ENCODE measurements at regions of chr2 and their contacts with region 1.

Region 1: DNA sequence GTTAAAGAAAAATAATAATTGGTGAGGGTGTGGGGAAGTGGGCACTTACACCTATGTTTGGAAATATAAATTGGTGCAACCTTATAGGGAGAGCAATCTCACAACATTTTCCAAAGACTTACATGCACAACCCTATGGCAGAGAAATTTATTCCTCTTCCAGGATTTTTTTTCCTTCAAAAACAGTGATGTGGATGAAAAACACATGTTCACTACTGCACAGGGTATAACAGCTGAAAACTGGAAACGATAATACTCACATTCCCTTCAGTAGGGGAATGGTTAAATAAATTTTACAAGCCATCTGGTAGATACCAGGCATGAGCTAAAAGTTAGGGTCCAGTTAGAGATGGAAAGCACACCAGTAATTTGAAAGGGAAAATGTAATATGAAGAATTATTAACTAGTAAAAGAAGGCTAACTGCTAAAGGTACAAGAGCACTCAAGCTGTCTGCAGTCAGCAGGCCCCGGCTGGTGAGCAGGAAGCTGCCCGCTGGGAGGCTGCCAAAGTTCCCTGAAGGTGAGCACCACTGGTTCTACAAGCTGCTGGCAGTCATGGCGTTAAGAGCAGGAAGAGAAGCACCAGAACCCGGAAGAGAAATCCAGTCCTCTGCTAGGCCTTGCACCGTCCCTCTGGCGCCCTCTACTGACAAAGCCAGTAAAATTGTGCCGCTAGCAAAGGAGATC is 28.4 kb upstream of the CASP8 start:
- DNase-seq: peak; percentile 85 to 96
- ATAC-seq: peak; percentile 66 to 76
- H3K4me3 ChIP-seq: peak overlapping the region; percentile 20; the same call in 1 of the 3 replicates
- H3K27ac ChIP-seq: peak overlapping the region; percentile 63 to 84
- H3K4me1 ChIP-seq: peaks cover 23% of the 10 kb centered on the region
- CTCF ChIP-seq: peak; percentile 89
- EP300 ChIP-seq: no peak
- POLR2A ChIP-seq: no peak
- RAD21 ChIP-seq: peak; percentile 79 to 89

Region 2: GRCh38 chr2:200901459-200902072 is 330.4 kb before region 1 on chr2:
- CTCF ChIA-PET with region 1: interaction called, 47 read pairs
- POLR2A ChIA-PET with region 1: interaction called, 5 read pairs
- DNase-seq: peak; percentile 90 to 94
- ATAC-seq: peak; percentile 95 to 98
- H3K4me3 ChIP-seq: no peak overlapping the region
- H3K27ac ChIP-seq: no peak overlapping the region
- H3K4me1 ChIP-seq: peaks cover 12% of the 10 kb centered on the region; the same call in 1 of the 3 replicates
- CTCF ChIP-seq: peak; percentile 87
- EP300 ChIP-seq: no peak
- POLR2A ChIP-seq: no peak
- RAD21 ChIP-seq: peak; percentile 85 to 88

Region 3: GRCh38 chr2:200913654-200914053 is 318.3 kb before region 1 on chr2:
- CTCF ChIA-PET with region 1: interaction called, 14 read pairs
- POLR2A ChIA-PET with region 1: no interaction called
- DNase-seq: no peak
- ATAC-seq: no peak
- H3K4me3 ChIP-seq: no peak overlapping the region
- H3K27ac ChIP-seq: no peak overlapping the region
- H3K4me1 ChIP-seq: no peaks in the 10 kb centered on the region
- CTCF ChIP-seq: no peak
- EP300 ChIP-seq: no peak
- POLR2A ChIP-seq: no peak
- RAD21 ChIP-seq: no peak

Region 4: DNA sequence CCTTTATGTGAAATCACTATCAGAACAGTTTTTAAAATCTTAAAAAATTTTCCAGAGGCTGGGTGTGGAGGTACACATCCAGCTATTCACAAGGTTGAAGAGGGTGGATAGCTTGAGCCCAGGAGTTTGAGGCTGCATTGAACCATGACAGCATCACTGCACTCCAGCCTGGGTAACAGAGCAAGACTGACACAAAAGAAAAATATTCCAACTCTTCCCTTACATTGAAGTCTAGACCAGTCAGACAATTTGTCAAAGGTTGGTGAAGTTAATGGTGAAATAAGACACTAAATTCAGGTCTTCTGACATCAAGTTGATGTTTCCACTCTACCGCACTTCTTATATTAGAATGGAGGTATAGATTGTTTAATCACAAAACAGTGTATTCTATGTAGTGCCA is 213.3 kb before region 1 on chr2:
- CTCF ChIA-PET with region 1: no interaction called
- POLR2A ChIA-PET with region 1: no interaction called
- DNase-seq: no peak
- ATAC-seq: no peak
- H3K4me3 ChIP-seq: no peak overlapping the region
- H3K27ac ChIP-seq: no peak overlapping the region
- H3K4me1 ChIP-seq: no peaks in the 10 kb centered on the region
- CTCF ChIP-seq: no peak
- EP300 ChIP-seq: no peak
- POLR2A ChIP-seq: no peak
- RAD21 ChIP-seq: no peak

Region 5: GRCh38 chr2:201182650-201183364 is 49.1 kb before region 1 on chr2 and contains the start of gene CASP10:
- CTCF ChIA-PET with region 1: interaction called, 45 read pairs
- POLR2A ChIA-PET with region 1: interaction called, 23 read pairs
- DNase-seq: peak; percentile 84 to 89
- ATAC-seq: peak; percentile 95 to 97
- H3K4me3 ChIP-seq: peak within 1 kb of the TSS; percentile 52
- H3K27ac ChIP-seq: peak within 1 kb of the TSS; percentile 73 to 85
- H3K4me1 ChIP-seq: peaks cover 11% of the 10 kb centered on the region; the same call in 2 of the 3 replicates
- CTCF ChIP-seq: peak; percentile 71
- EP300 ChIP-seq: no peak
- POLR2A ChIP-seq: no peak
- RAD21 ChIP-seq: peak; percentile 68 to 77
- polyA plus RNA-seq, gene CASP10: 6.5 and 6.8 TPM in 2 replicates

Region 6: GRCh38 chr2:201194097-201194496 is 37.8 kb before region 1 on chr2:
- CTCF ChIA-PET with region 1: interaction called, 10 read pairs
- POLR2A ChIA-PET with region 1: no interaction called
- DNase-seq: no peak
- ATAC-seq: no peak
- H3K4me3 ChIP-seq: no peak overlapping the region
- H3K27ac ChIP-seq: no peak overlapping the region
- H3K4me1 ChIP-seq: no peaks in the 10 kb centered on the region
- CTCF ChIP-seq: no peak
- EP300 ChIP-seq: no peak
- POLR2A ChIP-seq: no peak
- RAD21 ChIP-seq: no peak

Region 7: DNA sequence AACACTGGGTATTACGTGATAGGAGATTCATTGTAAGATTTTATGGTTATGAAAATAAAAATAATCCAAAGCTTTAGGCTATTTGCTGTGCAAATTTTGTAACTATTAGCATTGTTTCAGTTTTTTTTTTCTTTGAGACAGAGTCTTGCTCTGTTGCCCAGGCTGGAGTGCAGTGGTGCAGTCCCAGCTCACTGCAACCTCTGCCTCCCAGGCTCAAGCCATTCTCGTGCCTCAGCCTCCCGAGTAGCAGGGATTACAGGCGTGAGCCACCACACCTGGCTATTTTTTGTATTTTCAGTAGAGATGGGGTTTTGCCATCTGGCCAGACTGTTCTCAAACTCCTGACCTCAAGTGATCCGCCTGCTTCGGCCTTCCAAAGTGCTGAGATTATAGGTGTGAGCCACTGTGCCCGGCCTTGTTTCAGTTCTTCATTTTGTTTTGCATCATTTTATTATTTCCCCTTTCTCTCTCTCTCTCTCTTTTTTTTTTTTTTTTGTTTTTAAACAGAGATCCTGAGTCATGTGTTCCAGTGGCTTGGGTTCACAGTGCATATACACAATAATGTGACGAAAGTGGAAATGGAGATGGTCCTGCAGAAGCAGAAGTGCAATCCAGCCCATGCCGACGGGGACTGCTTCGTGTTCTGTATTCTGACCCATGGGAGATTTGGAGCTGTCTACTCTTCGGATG is 23.2 kb before region 1 on chr2:
- CTCF ChIA-PET with region 1: interaction called, 12 read pairs
- POLR2A ChIA-PET with region 1: no interaction called
- DNase-seq: no peak
- ATAC-seq: no peak
- H3K4me3 ChIP-seq: no peak overlapping the region
- H3K27ac ChIP-seq: no peak overlapping the region
- H3K4me1 ChIP-seq: no peaks in the 10 kb centered on the region
- CTCF ChIP-seq: no peak
- EP300 ChIP-seq: no peak
- POLR2A ChIP-seq: no peak
- RAD21 ChIP-seq: no peak

Region 8: GRCh38 chr2:201220102-201220570 is 11.8 kb before region 1 on chr2:
- CTCF ChIA-PET with region 1: interaction called, 25 read pairs
- POLR2A ChIA-PET with region 1: no interaction called
- DNase-seq: no peak
- ATAC-seq: no peak
- H3K4me3 ChIP-seq: no peak overlapping the region
- H3K27ac ChIP-seq: no peak overlapping the region
- H3K4me1 ChIP-seq: no peaks in the 10 kb centered on the region
- CTCF ChIP-seq: no peak
- EP300 ChIP-seq: no peak
- POLR2A ChIP-seq: no peak
- RAD21 ChIP-seq: no peak

Measured in A549 (cell line).